ENCODE measurements at regions of chr14 and their contacts with region 1.

Region 1: GRCh38 chr14:56491299-56492285 is 88.0 kb upstream of the TMEM260 start:
- DNase-seq: peak; percentile 49
- H3K4me3 Mint-ChIP-seq: no peak overlapping the region
- H3K27ac Mint-ChIP-seq: no peak overlapping the region
- H3K4me1 Mint-ChIP-seq: peaks cover 13% of the 10 kb centered on the region
- H3K27me3 Mint-ChIP-seq: peaks cover 27% of the 10 kb centered on the region
- CTCF ChIP-seq: peak; percentile 51

Region 2: GRCh38 chr14:56339855-56340701 is 151.5 kb before region 1 on chr14:
- CTCF ChIA-PET with region 1: no interaction called
- POLR2A ChIA-PET with region 1: no interaction called
- intact Hi-C with region 1: no loop called
- DNase-seq: peak; percentile 91
- H3K4me3 Mint-ChIP-seq: no peak overlapping the region
- H3K27ac Mint-ChIP-seq: no peak overlapping the region
- H3K4me1 Mint-ChIP-seq: peaks cover 9% of the 10 kb centered on the region
- H3K27me3 Mint-ChIP-seq: no peaks in the 10 kb centered on the region
- CTCF ChIP-seq: peak; percentile 45

Region 3: GRCh38 chr14:56505361-56505760 is 13.8 kb after region 1 on chr14:
- CTCF ChIA-PET with region 1: interaction called, 38 read pairs
- POLR2A ChIA-PET with region 1: interaction called, 3 read pairs
- intact Hi-C with region 1: no loop called
- DNase-seq: no peak
- H3K4me3 Mint-ChIP-seq: no peak overlapping the region
- H3K27ac Mint-ChIP-seq: no peak overlapping the region
- H3K4me1 Mint-ChIP-seq: no peaks in the 10 kb centered on the region
- H3K27me3 Mint-ChIP-seq: peaks cover 30% of the 10 kb centered on the region
- CTCF ChIP-seq: no peak

Region 4: DNA sequence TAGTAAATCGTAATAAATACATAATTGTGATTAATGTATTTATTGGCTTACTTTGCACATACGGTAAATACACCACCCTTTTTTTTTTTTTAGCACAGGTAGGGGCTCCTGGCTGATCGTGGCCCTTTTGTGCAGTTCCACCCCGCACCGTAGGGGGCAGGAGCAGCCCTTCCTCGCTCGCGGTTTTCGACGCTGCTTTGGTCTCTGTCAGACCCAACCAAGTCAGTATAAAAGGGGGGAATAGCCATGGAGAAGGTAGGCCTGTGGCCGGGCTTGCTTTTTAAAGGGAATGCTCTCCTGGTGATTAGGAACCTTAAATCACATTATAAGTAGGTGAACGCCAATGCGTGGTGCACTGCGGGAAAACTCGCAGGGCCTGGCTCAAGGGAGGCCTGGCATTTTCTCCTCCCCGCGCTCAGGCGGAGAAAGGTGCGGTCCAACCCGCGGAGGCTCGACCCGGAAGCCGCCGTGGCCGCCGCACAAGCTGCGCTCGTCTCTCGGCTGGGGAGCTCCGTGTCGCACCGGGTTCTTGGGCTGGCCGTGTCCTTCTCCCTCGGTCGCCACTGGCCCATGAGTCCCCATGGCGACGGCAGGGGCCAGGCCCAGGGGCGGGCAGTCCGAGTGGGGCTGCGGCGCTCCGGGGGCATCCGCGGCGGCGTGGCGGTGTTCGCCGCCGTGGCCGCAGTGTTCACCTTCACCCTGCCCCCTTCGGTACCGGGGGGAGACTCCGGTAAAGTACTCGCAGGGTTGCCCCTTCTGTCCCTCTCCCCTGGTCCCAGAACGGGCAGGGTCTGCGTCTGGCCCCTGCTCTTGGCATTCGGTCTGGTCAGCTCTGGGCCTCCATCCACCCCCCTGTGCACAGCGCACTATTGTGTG is 88.0 kb after region 1 on chr14 and contains the start of gene TMEM260:
- CTCF ChIA-PET with region 1: interaction called, 30 read pairs
- POLR2A ChIA-PET with region 1: interaction called, 4 read pairs
- intact Hi-C with region 1: no loop called
- DNase-seq: peak; percentile 91
- H3K4me3 Mint-ChIP-seq: peak within 1 kb of the TSS; percentile 80
- H3K27ac Mint-ChIP-seq: peak within 1 kb of the TSS; percentile 94
- H3K4me1 Mint-ChIP-seq: peaks cover 30% of the 10 kb centered on the region
- H3K27me3 Mint-ChIP-seq: no peaks in the 10 kb centered on the region
- CTCF ChIP-seq: peak; percentile 76
- total RNA-seq, gene TMEM260: 19.8 and 20.8 TPM in 2 replicates

Region 5: GRCh38 chr14:56874375-56874774 is 382.8 kb after region 1 on chr14:
- CTCF ChIA-PET with region 1: no interaction called
- POLR2A ChIA-PET with region 1: no interaction called
- intact Hi-C with region 1: loop called (anchors 2 kb)
- DNase-seq: peak; percentile 43
- H3K4me3 Mint-ChIP-seq: no peak overlapping the region
- H3K27ac Mint-ChIP-seq: no peak overlapping the region
- H3K4me1 Mint-ChIP-seq: no peaks in the 10 kb centered on the region
- H3K27me3 Mint-ChIP-seq: peaks cover 60% of the 10 kb centered on the region
- CTCF ChIP-seq: peak; percentile 40

Region 6: GRCh38 chr14:57317316-57317715 is 825.7 kb after region 1 on chr14:
- CTCF ChIA-PET with region 1: interaction called, 5 read pairs
- POLR2A ChIA-PET with region 1: no interaction called
- intact Hi-C with region 1: loop called (anchors 1 kb)
- DNase-seq: peak; percentile 90
- H3K4me3 Mint-ChIP-seq: no peak overlapping the region
- H3K27ac Mint-ChIP-seq: no peak overlapping the region
- H3K4me1 Mint-ChIP-seq: no peaks in the 10 kb centered on the region
- H3K27me3 Mint-ChIP-seq: no peaks in the 10 kb centered on the region
- CTCF ChIP-seq: peak; percentile 91

Measured in MCF 10A (cell line).